Activated CD8-positive, alpha-beta T cell treated with anti-CD3 and anti-CD28 coated beads, Interleukin-2, amount 10 ng/mL, durations not matched to agents 7 days and 5 days (primary cell): ENCODE measurements at regions of chr2 and their contacts with region 1.

Region 1: GRCh38 chr2:198314559-198315153 is 510.3 kb downstream of the PLCL1 start:
- DNase-seq: peak; percentile 39
- ATAC-seq: peak; percentile 33
- H3K4me3 Mint-ChIP-seq: no peak overlapping the region
- H3K27ac Mint-ChIP-seq: no peak overlapping the region
- H3K4me1 Mint-ChIP-seq: no peaks in the 10 kb centered on the region
- H3K27me3 Mint-ChIP-seq: peaks cover 46% of the 10 kb centered on the region

Region 2: GRCh38 chr2:198044777-198045176 is 269.9 kb before region 1 on chr2:
- CTCF ChIA-PET with region 1: no interaction called
- POLR2A ChIA-PET with region 1: no interaction called
- DNase-seq: no peak
- ATAC-seq: no peak
- H3K4me3 Mint-ChIP-seq: no peak overlapping the region
- H3K27ac Mint-ChIP-seq: no peak overlapping the region
- H3K4me1 Mint-ChIP-seq: no peaks in the 10 kb centered on the region
- H3K27me3 Mint-ChIP-seq: no peaks in the 10 kb centered on the region

Region 3: DNA sequence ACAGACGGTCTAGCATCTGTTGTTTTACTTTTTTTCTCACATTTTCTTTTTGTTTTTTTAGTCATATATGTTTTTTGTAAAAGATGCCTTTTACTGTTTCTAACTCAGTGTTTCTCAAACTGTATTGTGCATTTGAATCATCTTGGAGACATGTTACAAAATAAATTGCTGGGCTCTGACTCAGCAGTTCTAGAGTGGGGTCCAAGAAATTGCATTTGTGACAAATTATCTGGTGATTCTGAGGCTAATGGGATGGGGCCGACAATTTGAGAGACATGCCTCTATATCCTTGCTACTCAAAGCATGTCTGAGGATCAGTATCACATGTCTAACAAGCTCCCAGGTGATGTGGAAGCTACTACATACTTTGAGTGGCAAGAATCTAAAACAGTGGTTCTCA is 31.5 kb before region 1 on chr2:
- CTCF ChIA-PET with region 1: no interaction called
- POLR2A ChIA-PET with region 1: no interaction called
- DNase-seq: no peak
- ATAC-seq: no peak
- H3K4me3 Mint-ChIP-seq: no peak overlapping the region
- H3K27ac Mint-ChIP-seq: no peak overlapping the region
- H3K4me1 Mint-ChIP-seq: no peaks in the 10 kb centered on the region
- H3K27me3 Mint-ChIP-seq: peaks cover 23% of the 10 kb centered on the region

Region 4: DNA sequence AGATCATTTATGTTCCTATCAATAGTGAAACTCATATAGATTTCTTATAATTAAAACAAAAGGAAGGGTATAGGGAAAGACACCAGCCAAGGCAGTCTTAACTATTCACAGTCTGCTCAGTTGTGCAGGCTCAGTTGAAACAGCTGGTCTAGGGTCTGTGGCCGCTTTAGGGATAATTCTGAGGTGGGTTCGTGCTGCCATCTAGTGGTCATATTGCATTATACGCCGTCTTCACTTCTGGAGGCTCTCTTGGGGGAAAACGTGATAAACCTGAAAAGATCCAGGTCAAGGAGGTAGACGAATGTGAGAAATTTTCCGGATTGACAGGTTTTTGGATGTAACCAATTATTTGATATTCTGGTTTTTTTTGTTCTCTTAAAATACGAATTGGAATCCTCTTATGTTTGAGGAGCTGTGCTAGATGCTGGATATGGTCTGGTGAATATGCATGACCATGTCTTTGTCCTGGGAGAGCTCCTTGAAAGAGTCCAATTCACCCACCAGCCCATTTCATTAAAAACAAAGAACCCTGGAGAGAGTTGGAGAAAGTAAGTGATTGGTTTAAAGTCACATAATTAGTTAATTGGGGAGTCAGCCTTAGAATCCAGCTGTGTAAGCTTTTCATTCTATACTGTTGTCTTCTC is 17.9 kb before region 1 on chr2:
- CTCF ChIA-PET with region 1: interaction called, 12 read pairs
- POLR2A ChIA-PET with region 1: no interaction called
- DNase-seq: peak; percentile 66
- ATAC-seq: peak; percentile 86
- H3K4me3 Mint-ChIP-seq: no peak overlapping the region
- H3K27ac Mint-ChIP-seq: no peak overlapping the region
- H3K4me1 Mint-ChIP-seq: no peaks in the 10 kb centered on the region
- H3K27me3 Mint-ChIP-seq: peaks cover 2% of the 10 kb centered on the region

Region 5: DNA sequence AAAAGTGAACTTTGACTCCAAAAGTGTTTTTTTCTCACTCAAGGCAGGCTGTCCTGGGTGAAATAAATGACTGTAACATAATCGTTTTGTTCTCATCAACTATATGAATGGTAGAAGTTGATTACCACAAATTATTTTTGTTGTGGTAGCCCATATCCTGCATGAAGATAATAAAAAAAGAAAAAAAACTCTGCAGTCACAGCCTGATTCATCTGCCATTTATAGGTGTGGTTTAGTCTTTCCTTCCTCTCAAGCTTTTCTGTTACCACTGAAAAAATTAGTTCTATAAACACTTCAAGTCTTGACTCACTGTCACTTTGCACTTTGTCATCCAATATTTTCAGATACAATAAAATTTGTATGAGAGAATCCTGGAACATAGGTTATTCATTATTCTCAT is 11.8 kb after region 1 on chr2:
- CTCF ChIA-PET with region 1: interaction called, 18 read pairs
- POLR2A ChIA-PET with region 1: no interaction called
- DNase-seq: no peak
- ATAC-seq: peak; percentile 88
- H3K4me3 Mint-ChIP-seq: peak overlapping the region; percentile 16
- H3K27ac Mint-ChIP-seq: no peak overlapping the region
- H3K4me1 Mint-ChIP-seq: peaks cover 28% of the 10 kb centered on the region
- H3K27me3 Mint-ChIP-seq: peaks cover 33% of the 10 kb centered on the region

Region 6: GRCh38 chr2:199488772-199489400 is 1174.2 kb after region 1 on chr2:
- CTCF ChIA-PET with region 1: interaction called, 13 read pairs
- POLR2A ChIA-PET with region 1: no interaction called
- DNase-seq: peak; percentile 56
- ATAC-seq: no peak
- H3K4me3 Mint-ChIP-seq: no peak overlapping the region
- H3K27ac Mint-ChIP-seq: no peak overlapping the region
- H3K4me1 Mint-ChIP-seq: no peaks in the 10 kb centered on the region
- H3K27me3 Mint-ChIP-seq: peaks cover 4% of the 10 kb centered on the region

Region 7: GRCh38 chr2:199739413-199740110 is 1424.9 kb after region 1 on chr2:
- CTCF ChIA-PET with region 1: interaction called, 12 read pairs
- POLR2A ChIA-PET with region 1: no interaction called
- DNase-seq: peak; percentile 69
- ATAC-seq: no peak
- H3K4me3 Mint-ChIP-seq: no peak overlapping the region
- H3K27ac Mint-ChIP-seq: no peak overlapping the region
- H3K4me1 Mint-ChIP-seq: no peaks in the 10 kb centered on the region
- H3K27me3 Mint-ChIP-seq: peaks cover 23% of the 10 kb centered on the region